Activated naive CD4-positive, alpha-beta T cell treated with anti-CD3 and anti-CD28 coated beads, Interleukin-2, amount 10 ng/mL, durations not matched to agents 7 days and 5 days (primary cell): ENCODE measurements at regions of chr17 and their contacts with region 1.

Region 1: GRCh38 chr17:41811549-41812380 is at the start of gene P3H4:
- DNase-seq: peak; percentile 83
- H3K4me3 Mint-ChIP-seq: peak within 1 kb of the TSS; percentile 77
- H3K27ac Mint-ChIP-seq: peak within 1 kb of the TSS; percentile 79
- H3K4me1 Mint-ChIP-seq: peaks cover 17% of the 10 kb centered on the region
- H3K27me3 Mint-ChIP-seq: peaks cover 50% of the 10 kb centered on the region

Region 2: DNA sequence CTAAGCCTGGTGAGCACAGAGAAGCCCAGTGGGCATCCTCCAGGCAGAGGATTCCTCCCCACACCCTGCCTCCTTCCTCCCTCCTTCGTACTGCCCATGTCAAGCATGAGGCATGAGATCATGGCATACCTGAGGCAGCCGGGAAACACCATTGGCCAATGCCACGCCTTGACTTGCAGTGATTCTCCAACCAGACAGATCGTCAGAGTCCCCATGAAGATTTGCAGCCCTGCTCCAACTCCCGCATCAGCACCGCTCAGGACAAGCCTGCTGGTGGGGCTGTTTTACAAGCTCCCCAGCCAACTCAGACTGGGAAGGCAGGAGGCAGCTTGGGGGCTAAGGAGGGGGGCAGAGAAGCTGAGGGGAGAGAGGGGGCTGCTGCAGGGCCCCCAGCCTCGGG is 196.3 kb before region 1 on chr17:
- CTCF ChIA-PET with region 1: no interaction called
- DNase-seq: no peak
- H3K4me3 Mint-ChIP-seq: no peak overlapping the region
- H3K27ac Mint-ChIP-seq: no peak overlapping the region
- H3K4me1 Mint-ChIP-seq: no peaks in the 10 kb centered on the region
- H3K27me3 Mint-ChIP-seq: peaks cover 9% of the 10 kb centered on the region

Region 3: GRCh38 chr17:41678907-41679739 is 132.6 kb before region 1 on chr17:
- CTCF ChIA-PET with region 1: no interaction called
- DNase-seq: peak; percentile 85
- H3K4me3 Mint-ChIP-seq: peak overlapping the region; percentile 86
- H3K27ac Mint-ChIP-seq: peak overlapping the region; percentile 98
- H3K4me1 Mint-ChIP-seq: peaks cover 64% of the 10 kb centered on the region
- H3K27me3 Mint-ChIP-seq: peaks cover 13% of the 10 kb centered on the region

Region 4: DNA sequence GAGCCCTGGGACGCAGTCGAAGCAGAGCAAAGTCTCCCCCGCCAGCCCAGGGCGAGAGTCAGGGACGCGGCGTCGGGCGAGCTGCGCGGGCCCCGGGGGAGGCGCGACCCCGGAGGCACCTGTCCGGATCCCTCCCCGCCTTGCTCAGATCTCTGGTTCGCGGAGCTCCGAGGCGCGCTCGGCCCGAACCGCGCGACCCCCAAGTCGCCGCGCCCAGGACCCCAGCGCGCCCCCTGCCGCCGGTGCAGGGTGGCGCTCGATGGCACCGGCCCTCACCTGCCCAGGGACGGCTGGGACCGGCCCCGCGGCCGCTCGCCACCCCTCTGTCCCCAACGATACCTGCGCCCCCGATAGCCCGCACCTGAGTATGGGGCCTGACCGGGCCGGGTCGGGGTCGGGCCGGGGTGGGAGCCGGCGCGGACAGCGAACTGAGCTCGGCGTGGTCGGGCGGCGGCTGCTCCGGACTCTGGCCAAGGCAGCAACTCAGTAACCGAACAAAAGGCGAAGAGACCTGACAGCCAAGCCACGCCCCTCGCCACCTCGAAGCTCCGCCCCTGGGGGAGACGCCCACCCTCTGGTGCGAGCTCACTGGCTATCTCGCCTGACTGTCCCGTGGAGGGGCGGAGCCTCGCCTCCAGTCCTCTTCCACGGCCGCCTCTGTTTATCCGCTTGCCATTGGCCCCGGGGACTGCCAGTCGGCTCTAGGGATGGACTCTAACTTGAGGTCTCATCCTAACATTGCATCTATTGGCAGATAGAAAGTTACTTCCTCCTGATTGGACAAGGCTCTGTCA is 25.3 kb before region 1 on chr17 and contains the start of gene JUP:
- CTCF ChIA-PET with region 1: interaction called, 10 read pairs
- DNase-seq: peak; percentile 92
- H3K4me3 Mint-ChIP-seq: peak within 1 kb of the TSS; percentile 59
- H3K27ac Mint-ChIP-seq: no peak within 1 kb of the TSS
- H3K4me1 Mint-ChIP-seq: peaks cover 30% of the 10 kb centered on the region
- H3K27me3 Mint-ChIP-seq: peaks cover 93% of the 10 kb centered on the region